GM10248 (cell line): ENCODE measurements at regions of chr4 and their contacts with region 1.

Region 1: DNA sequence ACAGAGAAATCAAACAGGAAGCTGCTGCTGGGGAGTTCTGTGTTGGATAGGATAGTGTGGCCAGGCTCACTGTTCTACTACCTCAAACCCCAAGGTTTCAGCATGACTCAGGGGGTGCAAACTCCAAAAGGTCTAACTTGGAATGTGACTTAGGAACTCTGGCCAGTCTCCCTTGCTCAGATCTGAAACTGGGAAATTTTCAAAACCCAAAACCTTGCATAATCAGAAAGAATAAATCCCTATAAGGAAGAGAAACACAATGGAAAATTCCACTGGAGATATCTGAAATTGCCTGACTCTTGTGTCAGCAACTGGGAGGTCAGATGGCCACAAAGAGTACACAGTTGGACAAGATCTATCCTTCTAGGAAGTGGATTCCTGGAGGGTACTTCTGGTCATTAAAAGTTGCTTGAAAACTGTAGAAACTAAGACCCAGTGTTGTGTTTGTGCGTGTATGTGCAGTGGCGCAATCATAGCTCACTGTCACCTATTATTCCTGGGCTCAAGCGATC is 58.0 kb downstream of the PPEF2 start:
- DNase-seq: no peak
- CTCF ChIP-seq: no peak

Region 2: GRCh38 chr4:75565481-75565880 is 278.7 kb before region 1 on chr4:
- CTCF ChIA-PET with region 1: interaction called, 12 read pairs
- POLR2A ChIA-PET with region 1: no interaction called
- DNase-seq: no peak
- CTCF ChIP-seq: no peak

Region 3: GRCh38 chr4:75658876-75659275 is 185.3 kb before region 1 on chr4:
- CTCF ChIA-PET with region 1: no interaction called
- POLR2A ChIA-PET with region 1: no interaction called
- DNase-seq: no peak
- CTCF ChIP-seq: no peak